Right ventricle myocardium superior (tissue), 1 donor: ENCODE measurements at regions of chr7 and their contacts with region 1.

Region 1: GRCh38 chr7:14924398-14924797 is 21.8 kb upstream of the DGKB start:
- DNase-seq: no peak
- ATAC-seq: no peak

Region 2: DNA sequence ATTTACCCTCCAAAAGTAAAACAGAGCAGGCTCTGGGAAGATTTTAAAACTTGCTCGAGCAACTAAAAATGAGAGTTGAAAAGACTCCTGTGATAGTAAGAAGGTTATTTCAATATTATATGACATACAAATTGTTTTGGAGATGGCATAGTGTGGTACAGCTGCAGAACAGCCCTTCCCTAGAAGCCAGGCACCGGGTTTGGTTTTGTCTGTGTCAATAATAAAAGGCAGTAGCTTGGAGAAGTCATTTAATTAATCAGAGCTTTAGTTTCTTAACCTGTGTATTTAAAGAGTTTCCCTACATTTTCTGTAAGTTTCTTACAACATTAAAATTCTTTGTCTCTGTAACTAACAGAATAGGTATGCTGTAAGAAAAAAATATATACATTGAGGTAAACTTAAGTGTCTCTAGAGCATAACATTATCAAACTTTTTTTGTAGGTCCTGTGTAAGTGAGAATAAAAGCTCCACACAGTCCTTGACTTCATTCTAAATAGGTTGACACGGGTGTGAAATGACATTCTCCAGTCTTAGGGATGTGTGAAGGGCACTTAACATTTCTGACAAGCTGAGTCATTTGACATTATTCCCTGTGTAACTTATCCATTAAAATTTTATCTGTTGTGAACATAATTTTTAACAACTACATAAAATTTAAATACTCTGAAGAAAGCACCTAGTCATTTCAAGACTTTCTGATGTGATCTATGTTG is 510.0 kb before region 1 on chr7:
- intact Hi-C with region 1: no loop called
- DNase-seq: no peak
- ATAC-seq: peak; percentile 96

Region 3: DNA sequence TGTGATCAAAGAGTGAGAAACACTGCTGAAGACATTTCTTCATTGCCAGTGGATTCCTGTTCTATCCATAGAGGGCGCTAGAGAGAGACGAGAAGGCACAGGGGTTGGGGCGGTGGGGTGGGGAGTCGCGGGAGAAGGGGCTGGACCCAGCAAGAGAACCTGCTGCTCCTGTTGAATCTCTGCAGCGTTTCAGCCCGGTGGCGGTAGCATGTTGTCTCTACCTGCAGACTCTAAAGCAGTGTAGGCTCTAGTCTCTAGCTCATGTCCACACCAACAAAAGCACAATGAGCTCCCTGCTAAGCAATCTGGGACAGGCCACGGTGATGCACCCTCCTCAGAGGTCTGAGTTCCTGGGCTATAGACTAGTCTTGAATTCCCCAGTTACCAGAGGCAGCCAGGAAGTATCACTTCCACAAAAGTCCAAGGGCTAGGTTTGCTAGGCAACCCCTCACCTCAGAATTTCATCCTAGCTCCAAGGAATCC is 189.5 kb before region 1 on chr7:
- intact Hi-C with region 1: loop called (anchors 10 kb)
- DNase-seq: no peak
- ATAC-seq: peak; percentile 29

Region 4: DNA sequence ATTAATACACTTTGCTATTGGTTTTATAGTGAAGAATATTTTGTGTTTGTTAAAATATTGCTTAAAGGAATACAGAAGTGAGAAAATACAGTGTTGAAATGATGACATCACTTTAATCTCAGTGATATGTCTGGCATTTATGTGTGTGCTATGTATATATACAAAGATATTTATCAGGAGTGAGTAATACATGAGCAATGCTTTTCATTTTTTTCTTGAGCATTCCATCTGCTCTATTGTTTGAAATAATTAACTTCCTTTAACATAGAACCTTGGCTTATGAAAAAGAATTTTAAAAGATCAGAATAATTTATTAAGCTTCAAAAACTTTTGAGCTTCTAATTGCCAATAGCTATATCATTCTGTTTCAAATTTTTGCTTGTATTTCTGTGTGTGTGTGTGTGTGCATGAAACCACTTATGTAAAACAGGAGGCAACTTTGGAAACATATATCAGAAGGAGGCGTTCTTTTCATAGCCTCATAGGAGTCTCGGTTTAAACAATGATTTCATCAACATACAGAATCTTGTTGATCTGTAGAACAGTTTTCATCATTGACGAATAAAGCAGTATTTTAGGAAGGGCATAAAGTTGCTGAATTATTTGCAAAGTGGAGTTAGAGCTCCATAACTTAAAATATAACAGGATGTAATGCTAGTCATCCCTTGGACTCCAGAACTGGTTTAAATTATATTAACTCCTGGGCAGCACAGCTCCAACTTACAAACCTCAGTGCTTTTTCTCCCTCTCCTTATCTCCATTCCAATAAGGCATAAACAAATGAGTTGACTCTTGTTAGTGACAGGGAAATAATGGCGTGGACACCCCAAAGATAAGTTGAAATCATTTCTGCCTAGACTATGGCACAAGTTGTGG is 206.5 kb after region 1 on chr7:
- intact Hi-C with region 1: no loop called
- DNase-seq: no peak
- ATAC-seq: no peak

Region 5: GRCh38 chr7:15209429-15209828 is 285.0 kb after region 1 on chr7:
- intact Hi-C with region 1: no loop called
- DNase-seq: no peak
- ATAC-seq: no peak